Natural killer cell (primary cell): ENCODE measurements at regions of chr5 and their contacts with region 1.

Region 1: GRCh38 chr5:139670369-139671095 is 22.4 kb downstream of the CXXC5 start:
- DNase-seq: peak; percentile 57 to 64
- ATAC-seq: peak; percentile 48 to 62 (median 60)
- H3K4me3 ChIP-seq: peak overlapping the region; percentile 70
- H3K4me3 Mint-ChIP-seq: peak overlapping the region; percentile 84
- H3K27ac ChIP-seq: peak overlapping the region; percentile 92
- H3K27ac Mint-ChIP-seq: peak overlapping the region; percentile 92 to 94
- H3K4me1 ChIP-seq: peaks cover 97% of the 10 kb centered on the region
- H3K4me1 Mint-ChIP-seq: peaks cover 59 to 89% of the 10 kb centered on the region in 2 donors
- H3K27me3 ChIP-seq: no peaks in the 10 kb centered on the region
- H3K27me3 Mint-ChIP-seq: no peaks in the 10 kb centered on the region
- CTCF ChIP-seq: peak; percentile 43

Region 2: DNA sequence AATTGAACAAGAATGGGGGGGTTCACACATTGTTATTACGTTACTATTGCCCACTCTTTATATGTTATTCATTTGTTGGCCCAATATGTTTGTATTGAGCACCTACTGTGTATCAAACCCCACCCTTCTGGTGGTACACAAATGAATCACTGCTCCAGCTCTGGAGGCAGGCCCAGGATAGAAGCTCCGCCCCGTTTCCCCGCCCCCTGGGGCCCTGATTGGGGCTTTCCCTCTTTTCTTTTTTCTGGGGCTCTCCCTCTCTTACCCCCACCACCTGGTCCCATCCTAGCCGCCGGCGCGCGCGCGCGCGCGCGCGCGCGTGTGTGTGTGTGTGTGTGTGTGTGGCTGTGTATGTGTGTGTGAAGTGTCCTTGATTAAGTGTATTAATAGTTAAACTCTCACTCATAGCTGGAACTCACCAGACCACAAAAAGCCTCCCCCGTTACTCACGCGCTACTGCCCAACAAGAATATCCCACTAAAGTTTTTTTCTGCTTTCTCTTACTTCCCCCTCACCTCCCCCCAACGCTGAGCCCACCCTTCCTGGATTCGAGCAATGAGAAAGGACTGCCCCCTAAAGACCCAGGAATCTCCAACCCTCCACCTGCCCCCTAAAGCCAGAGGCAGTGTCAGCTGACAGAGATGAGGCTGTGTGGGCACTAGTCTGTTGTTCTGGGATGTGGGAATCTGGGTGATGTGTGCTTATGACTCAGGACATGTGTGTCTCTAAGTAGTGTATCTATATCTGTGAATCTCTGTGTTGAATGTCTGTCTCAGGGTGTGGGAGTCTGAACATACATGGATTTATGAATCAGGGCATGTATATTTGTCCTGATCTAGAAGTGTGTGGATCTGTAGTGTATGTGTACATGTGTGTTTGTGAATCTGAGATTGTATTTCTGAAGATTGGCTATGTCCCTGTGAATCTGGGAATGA is 18.4 kb before region 1 on chr5:
- intact Hi-C with region 1: loop called (anchors 1 kb)
- DNase-seq: peak; percentile 81 to 84
- ATAC-seq: peak; percentile 50 to 66 (median 64)
- H3K4me3 ChIP-seq: peak overlapping the region; percentile 73
- H3K4me3 Mint-ChIP-seq: peak overlapping the region; percentile 88
- H3K27ac ChIP-seq: peak overlapping the region; percentile 85
- H3K27ac Mint-ChIP-seq: peak overlapping the region; percentile 91 to 94
- H3K4me1 ChIP-seq: peaks cover 85% of the 10 kb centered on the region
- H3K4me1 Mint-ChIP-seq: peaks cover 66 to 84% of the 10 kb centered on the region in 2 donors
- H3K27me3 ChIP-seq: no peaks in the 10 kb centered on the region
- H3K27me3 Mint-ChIP-seq: no peaks in the 10 kb centered on the region
- CTCF ChIP-seq: no peak

Region 3: DNA sequence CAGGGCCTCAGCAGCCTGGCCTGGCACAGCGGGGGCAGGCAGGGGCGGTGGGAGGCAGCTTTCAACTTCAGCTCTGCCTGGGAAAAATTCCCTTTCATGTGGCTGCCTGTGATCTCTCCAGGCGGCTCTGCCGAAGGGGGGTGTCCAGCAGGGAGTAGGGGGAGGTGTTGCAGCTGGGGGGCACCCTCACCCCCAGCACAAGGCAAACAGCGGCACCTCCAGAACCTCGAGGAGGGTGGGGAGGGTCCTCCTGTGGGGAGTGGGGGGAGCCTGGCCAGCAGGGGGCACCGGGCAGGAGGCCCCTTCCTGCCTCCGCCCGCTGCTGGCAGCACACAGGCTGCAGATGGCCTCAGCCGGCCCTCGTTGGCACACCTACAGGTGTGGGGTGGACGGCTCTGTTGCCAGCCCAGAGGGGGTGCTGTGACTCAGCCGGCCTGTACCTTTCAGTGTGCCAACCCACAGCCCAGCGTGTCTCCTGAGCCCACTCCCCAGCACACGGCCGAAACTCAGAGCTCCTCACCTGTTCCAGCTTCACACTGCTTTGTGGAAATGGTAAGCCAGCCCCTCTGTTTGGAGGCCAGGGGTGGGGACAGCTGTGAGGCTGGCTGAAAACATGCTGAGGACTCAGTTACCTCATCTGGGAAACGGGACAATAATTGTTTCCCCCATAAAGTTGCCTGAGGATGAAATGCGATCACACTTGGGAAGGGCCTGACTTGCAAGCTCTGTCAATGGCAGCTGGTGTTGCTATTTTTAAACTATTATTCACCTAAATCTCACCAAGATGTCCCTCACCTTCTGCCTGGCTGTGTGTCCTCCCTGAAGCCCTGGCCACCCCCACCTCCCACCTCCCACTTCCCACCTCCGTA is 14.6 kb after region 1 on chr5:
- intact Hi-C with region 1: loop called (anchors 2 kb)
- DNase-seq: no peak
- ATAC-seq: peak in 2 of 3 donors; percentile 5 to 8
- H3K4me3 ChIP-seq: no peak overlapping the region
- H3K4me3 Mint-ChIP-seq: no peak overlapping the region
- H3K27ac ChIP-seq: peak overlapping the region; percentile 0
- H3K27ac Mint-ChIP-seq: peak overlapping the region; percentile 84 to 85
- H3K4me1 ChIP-seq: peaks cover 71% of the 10 kb centered on the region
- H3K4me1 Mint-ChIP-seq: peaks cover 50 to 65% of the 10 kb centered on the region in 2 donors
- H3K27me3 ChIP-seq: no peaks in the 10 kb centered on the region
- H3K27me3 Mint-ChIP-seq: no peaks in the 10 kb centered on the region
- CTCF ChIP-seq: no peak

Region 4: DNA sequence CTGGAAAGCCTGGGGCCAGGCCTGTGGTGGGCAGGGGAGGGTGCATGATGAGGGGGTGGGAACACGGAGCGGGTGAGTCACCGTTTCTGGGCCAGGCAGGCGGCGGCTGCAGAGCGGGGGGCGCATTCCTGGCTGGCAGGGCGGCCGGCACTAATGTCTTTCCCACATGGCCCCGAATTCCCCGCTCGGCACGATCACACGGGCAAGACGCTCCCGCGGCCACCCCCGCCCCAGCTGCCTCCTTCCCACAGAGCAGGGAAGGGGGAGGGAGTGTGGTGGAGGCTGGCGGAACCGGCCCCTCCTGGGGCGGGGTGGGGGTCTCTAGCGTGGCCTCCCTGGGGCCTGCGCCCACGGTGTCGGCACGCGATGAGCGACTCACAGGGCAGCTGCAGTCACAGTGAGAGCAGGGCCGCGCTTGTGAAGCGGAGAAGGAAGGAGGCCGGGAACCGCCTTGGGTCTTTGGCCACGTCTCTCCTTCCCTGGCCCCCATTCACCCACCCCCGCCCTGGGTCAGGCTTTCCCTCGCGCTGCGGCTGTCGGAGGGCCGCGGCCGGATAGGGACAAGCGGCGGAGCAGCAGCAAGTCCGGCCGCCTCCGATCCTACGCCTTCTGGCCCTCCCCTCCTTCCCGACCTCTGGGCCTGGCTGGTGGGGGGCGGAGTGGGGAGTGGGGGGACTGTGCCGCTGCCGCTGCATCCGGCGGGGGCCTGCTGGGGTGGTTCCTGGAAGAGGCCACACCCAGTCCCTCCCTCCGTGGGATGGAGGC is 26.5 kb after region 1 on chr5:
- intact Hi-C with region 1: loop called (anchors 2 kb)
- DNase-seq: peak; percentile 37 to 49
- ATAC-seq: peak; percentile 24 to 75 (median 52)
- H3K4me3 ChIP-seq: peak overlapping the region; percentile 30
- H3K4me3 Mint-ChIP-seq: peak overlapping the region; percentile 91
- H3K27ac ChIP-seq: no peak overlapping the region
- H3K27ac Mint-ChIP-seq: peak overlapping the region; percentile 73 to 84
- H3K4me1 ChIP-seq: peaks cover 66% of the 10 kb centered on the region
- H3K4me1 Mint-ChIP-seq: peaks cover 49 to 57% of the 10 kb centered on the region in 2 donors
- H3K27me3 ChIP-seq: no peaks in the 10 kb centered on the region
- H3K27me3 Mint-ChIP-seq: no peaks in the 10 kb centered on the region
- CTCF ChIP-seq: no peak

Region 5: GRCh38 chr5:139711067-139711905 is 40.8 kb after region 1 on chr5:
- intact Hi-C with region 1: loop called (anchors 2 kb)
- DNase-seq: peak; percentile 71 to 84
- ATAC-seq: peak; percentile 62 to 77 (median 70)
- H3K4me3 ChIP-seq: peak overlapping the region; percentile 65
- H3K4me3 Mint-ChIP-seq: peak overlapping the region; percentile 83
- H3K27ac ChIP-seq: peak overlapping the region; percentile 97
- H3K27ac Mint-ChIP-seq: peak overlapping the region; percentile 89 to 94
- H3K4me1 ChIP-seq: peaks cover 48% of the 10 kb centered on the region
- H3K4me1 Mint-ChIP-seq: peaks cover 32 to 43% of the 10 kb centered on the region in 2 donors
- H3K27me3 ChIP-seq: no peaks in the 10 kb centered on the region
- H3K27me3 Mint-ChIP-seq: no peaks in the 10 kb centered on the region
- CTCF ChIP-seq: peak; percentile 31